Heart left ventricle (tissue), 16 donors: ENCODE measurements at regions of chr9 and their contacts with region 1.

Region 1: DNA sequence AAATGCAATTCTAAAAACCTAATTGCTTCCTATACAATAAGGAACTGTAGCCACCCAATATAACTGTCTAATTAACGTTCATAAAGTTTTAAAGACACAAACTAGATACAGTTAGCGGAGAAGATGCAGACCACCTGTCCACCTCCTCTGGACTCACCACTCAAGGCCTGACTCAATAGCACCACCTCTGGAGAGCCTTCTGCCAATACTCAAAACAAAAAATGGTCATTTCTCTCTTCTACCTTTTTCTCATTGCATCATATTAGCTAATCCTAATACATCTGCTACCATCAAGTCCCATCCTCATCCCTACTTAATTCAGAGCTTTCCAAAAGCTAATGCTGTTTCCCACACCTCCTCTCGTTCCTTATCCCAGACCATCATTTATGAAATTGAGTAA is 159.9 kb downstream of the MLLT3 start:
- DNase-seq: no peak
- ATAC-seq: no peak
- H3K4me3 ChIP-seq: no peak overlapping the region
- H3K27ac ChIP-seq: no peak overlapping the region
- H3K4me1 ChIP-seq: peaks cover 0 to 10% (median 2%) of the 10 kb centered on the region in 12 donors
- H3K27me3 ChIP-seq: no peaks in the 10 kb centered on the region
- CTCF ChIP-seq: peak in 1 of 12 donors; percentile 8
- POLR2A ChIP-seq: no peak

Region 2: GRCh38 chr9:20508242-20508641 is 45.8 kb after region 1 on chr9:
- intact Hi-C with region 1: loop called in 1 of 10 experiments (anchors 10 kb)
- DNase-seq: no peak
- ATAC-seq: no peak
- H3K4me3 ChIP-seq: no peak overlapping the region
- H3K27ac ChIP-seq: peak overlapping the region in 1 of 12 donors; percentile 4
- H3K4me1 ChIP-seq: peaks cover 0 to 43% (median 24%) of the 10 kb centered on the region in 12 donors
- H3K27me3 ChIP-seq: no peaks in the 10 kb centered on the region
- CTCF ChIP-seq: no peak
- POLR2A ChIP-seq: no peak

Region 3: DNA sequence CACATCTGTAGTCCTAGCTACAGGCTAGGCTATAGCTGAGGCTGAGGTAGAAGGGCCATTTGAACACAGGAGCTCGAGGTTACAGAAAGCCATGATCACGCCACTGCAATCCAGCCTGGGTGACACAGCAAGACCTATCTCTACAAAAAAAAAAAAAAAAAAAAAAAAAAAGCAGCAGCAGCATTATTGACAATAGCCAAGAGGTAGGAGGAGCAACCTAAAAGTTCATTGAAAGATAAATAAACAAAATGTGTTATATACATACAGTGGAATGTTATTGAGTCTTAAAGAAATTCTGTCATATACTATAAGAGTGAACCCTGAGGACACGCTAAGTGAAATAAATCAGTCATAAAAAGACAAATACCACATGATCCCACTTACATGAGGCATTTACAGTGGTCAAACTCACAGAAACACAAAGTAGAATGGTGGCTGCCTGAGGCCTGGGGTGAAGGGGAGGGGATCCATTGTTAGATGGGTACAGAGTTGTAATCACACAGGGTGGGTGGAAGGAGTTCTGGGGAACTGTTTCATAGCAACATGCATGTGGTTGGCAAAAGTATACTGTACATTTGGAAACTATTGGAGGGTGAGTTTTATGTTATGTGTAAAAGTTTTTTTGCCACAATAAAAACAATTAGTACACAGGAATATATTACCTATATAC is 82.7 kb after region 1 on chr9:
- intact Hi-C with region 1: loop called in 1 of 10 experiments (anchors 10 kb)
- DNase-seq: no peak
- ATAC-seq: no peak
- H3K4me3 ChIP-seq: no peak overlapping the region
- H3K27ac ChIP-seq: no peak overlapping the region
- H3K4me1 ChIP-seq: peaks cover 0 to 12% (median 0%) of the 10 kb centered on the region in 12 donors
- H3K27me3 ChIP-seq: no peaks in the 10 kb centered on the region
- CTCF ChIP-seq: no peak
- POLR2A ChIP-seq: no peak

Region 4: GRCh38 chr9:20604562-20604961 is 142.2 kb after region 1 on chr9:
- intact Hi-C with region 1: no loop called
- DNase-seq: no peak
- ATAC-seq: peak in 2 of 4 donors; percentile 71 to 73
- H3K4me3 ChIP-seq: peak overlapping the region in 9 of 12 donors; percentile 14 to 47 (median 35)
- H3K27ac ChIP-seq: peak overlapping the region in 9 of 12 donors; percentile 3 to 57 (median 33)
- H3K4me1 ChIP-seq: peaks cover 0 to 57% (median 32%) of the 10 kb centered on the region in 12 donors
- H3K27me3 ChIP-seq: no peaks in the 10 kb centered on the region
- CTCF ChIP-seq: no peak
- POLR2A ChIP-seq: no peak